H1 (cell line): ENCODE measurements at regions of chr3 and their contacts with region 1.

Region 1: GRCh38 chr3:107690522-107691138 is 167.9 kb downstream of the BBX start:
- DNase-seq: no peak
- H3K4me3 ChIP-seq: no peak overlapping the region
- H3K27ac ChIP-seq: no peak overlapping the region
- H3K4me1 ChIP-seq: no peaks in the 10 kb centered on the region
- H3K27me3 ChIP-seq: no peaks in the 10 kb centered on the region
- CTCF ChIP-seq: peak in 2 of 3 experiments; percentile 22 to 43; a peak in 2 of 4 replicates
- EP300 ChIP-seq: no peak
- POLR2A ChIP-seq: no peak
- RAD21 ChIP-seq: peak in 1 of 2 experiments; percentile 18; a peak in 2 of 4 replicates

Region 2: GRCh38 chr3:107654218-107654617 is 36.4 kb before region 1 on chr3:
- CTCF ChIA-PET with region 1: no interaction called
- POLR2A ChIA-PET with region 1: no interaction called
- DNase-seq: no peak
- H3K4me3 ChIP-seq: no peak overlapping the region
- H3K27ac ChIP-seq: no peak overlapping the region
- H3K4me1 ChIP-seq: no peaks in the 10 kb centered on the region
- H3K27me3 ChIP-seq: no peaks in the 10 kb centered on the region
- CTCF ChIP-seq: no peak
- EP300 ChIP-seq: no peak
- POLR2A ChIP-seq: no peak
- RAD21 ChIP-seq: no peak

Region 3: GRCh38 chr3:107704477-107704876 is 13.8 kb after region 1 on chr3:
- CTCF ChIA-PET with region 1: interaction called, 10 read pairs
- POLR2A ChIA-PET with region 1: interaction called, 3 read pairs
- DNase-seq: no peak
- H3K4me3 ChIP-seq: no peak overlapping the region
- H3K27ac ChIP-seq: no peak overlapping the region
- H3K4me1 ChIP-seq: 0 out of 7 replicates have a peak, but pooled peaks cover 0 to 2% (median 0%) of the 10 kb centered on the region in 4 experiments
- H3K27me3 ChIP-seq: no peaks in the 10 kb centered on the region
- CTCF ChIP-seq: no peak
- EP300 ChIP-seq: no peak
- POLR2A ChIP-seq: no peak
- RAD21 ChIP-seq: no peak

Region 4: DNA sequence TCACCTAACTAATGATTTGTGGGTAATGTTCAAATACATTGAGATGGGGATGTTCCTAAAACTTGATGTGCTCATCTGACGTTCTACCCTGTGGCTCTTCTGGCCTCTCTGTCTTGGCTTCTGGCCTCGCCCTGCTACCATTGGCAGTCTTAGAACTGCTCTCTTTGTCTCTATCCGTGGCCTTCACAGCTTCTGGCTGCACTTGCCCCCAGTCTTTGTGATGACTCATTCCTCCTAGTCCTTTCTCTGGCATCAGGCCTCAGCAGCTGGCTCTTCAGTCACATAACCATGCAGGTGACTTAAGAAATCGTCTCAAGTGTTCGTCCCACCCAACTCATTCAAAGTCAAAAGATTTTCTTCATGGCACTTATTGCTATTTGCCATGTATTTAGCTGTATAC is 20.2 kb after region 1 on chr3:
- CTCF ChIA-PET with region 1: interaction called, 15 read pairs
- POLR2A ChIA-PET with region 1: no interaction called
- DNase-seq: no peak
- H3K4me3 ChIP-seq: no peak overlapping the region
- H3K27ac ChIP-seq: no peak overlapping the region
- H3K4me1 ChIP-seq: no peaks in the 10 kb centered on the region
- H3K27me3 ChIP-seq: no peaks in the 10 kb centered on the region
- CTCF ChIP-seq: no peak
- EP300 ChIP-seq: no peak
- POLR2A ChIP-seq: no peak
- RAD21 ChIP-seq: no peak

Region 5: DNA sequence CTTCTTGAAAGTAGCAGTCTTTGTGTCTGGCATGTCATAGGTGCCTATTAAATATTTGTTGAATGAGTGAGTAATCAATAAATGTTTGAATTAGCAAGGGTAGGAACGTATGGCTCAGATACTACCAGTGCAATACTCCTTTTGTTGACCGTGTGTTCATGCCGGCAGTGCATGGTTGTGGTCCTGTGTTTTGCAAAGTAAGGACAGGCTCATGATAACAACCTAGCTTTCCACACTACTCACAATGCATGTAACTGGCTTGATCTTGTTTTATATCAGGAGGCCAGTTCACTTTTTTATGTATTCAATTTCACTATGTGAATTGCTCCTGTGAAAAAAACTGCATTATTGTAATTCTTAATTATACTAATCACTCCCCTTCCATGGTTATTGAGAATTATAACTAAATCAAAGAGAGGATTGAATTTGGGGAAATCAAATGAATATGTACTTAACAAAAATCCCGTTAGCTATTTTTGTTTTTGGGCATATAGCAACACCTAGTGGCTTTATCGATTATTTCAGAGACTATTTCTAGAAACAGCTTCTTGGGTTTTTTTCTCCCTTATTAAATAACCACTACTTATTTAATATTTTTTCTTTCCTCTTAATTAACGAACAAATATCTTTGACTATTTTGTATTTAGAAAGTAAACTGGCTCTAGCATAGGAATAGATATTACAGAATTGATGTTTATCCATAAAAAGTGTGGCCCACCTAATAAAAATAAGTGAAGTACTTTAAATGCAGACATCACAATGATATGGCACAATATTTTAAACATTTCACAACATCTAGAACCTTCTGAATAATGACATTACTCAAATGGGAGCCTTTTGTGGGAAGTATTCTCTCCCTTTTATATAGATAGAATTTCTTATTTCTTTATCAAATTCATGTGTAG is 50.6 kb after region 1 on chr3:
- CTCF ChIA-PET with region 1: interaction called, 40 read pairs
- POLR2A ChIA-PET with region 1: interaction called, 3 read pairs
- DNase-seq: no peak
- H3K4me3 ChIP-seq: no peak overlapping the region
- H3K27ac ChIP-seq: no peak overlapping the region
- H3K4me1 ChIP-seq: no peaks in the 10 kb centered on the region
- H3K27me3 ChIP-seq: no peaks in the 10 kb centered on the region
- CTCF ChIP-seq: peak in 1 of 3 experiments; percentile 30; a peak in 1 of 4 replicates
- EP300 ChIP-seq: no peak
- POLR2A ChIP-seq: no peak
- RAD21 ChIP-seq: peak in 1 of 2 experiments; percentile 64; a peak in 3 of 4 replicates